Adrenal gland (tissue), 19 donors: ENCODE measurements at regions of chr21 and their contacts with region 1.

Region 1: GRCh38 chr21:44051462-44051941 is 39.4 kb downstream of the TRAPPC10 start:
- DNase-seq: peak; percentile 33 to 84 (median 75)
- H3K4me3 ChIP-seq: no peak overlapping the region
- H3K27ac ChIP-seq: peak overlapping the region in 4 of 5 donors; percentile 52 to 85 (median 67)
- H3K4me1 ChIP-seq: peaks cover 6 to 35% of the 10 kb centered on the region in 2 donors
- H3K27me3 ChIP-seq: no peaks in the 10 kb centered on the region
- CTCF ChIP-seq: no peak
- POLR2A ChIP-seq: no peak

Region 2: GRCh38 chr21:44018812-44019567 is 32.5 kb before region 1 on chr21:
- intact Hi-C with region 1: loop called in 1 of 2 experiments (anchors 5 kb)
- DNase-seq: peak in 1 of 7 donors; percentile 13
- H3K4me3 ChIP-seq: no peak overlapping the region
- H3K27ac ChIP-seq: peak overlapping the region in 1 of 5 donors; percentile 34
- H3K4me1 ChIP-seq: peaks cover 16 to 44% of the 10 kb centered on the region in 2 donors
- H3K27me3 ChIP-seq: no peaks in the 10 kb centered on the region
- CTCF ChIP-seq: peak in 1 of 6 experiments; percentile 10
- POLR2A ChIP-seq: no peak

Region 3: GRCh38 chr21:44199465-44199864 is 148.0 kb after region 1 on chr21:
- intact Hi-C with region 1: no loop called
- DNase-seq: peak in 1 of 7 donors; percentile 13
- H3K4me3 ChIP-seq: no peak overlapping the region
- H3K27ac ChIP-seq: no peak overlapping the region
- H3K4me1 ChIP-seq: no peaks in the 10 kb centered on the region
- H3K27me3 ChIP-seq: no peaks in the 10 kb centered on the region
- CTCF ChIP-seq: no peak
- POLR2A ChIP-seq: no peak